ENCODE measurements at regions of chr4 and their contacts with region 1.

Region 1: DNA sequence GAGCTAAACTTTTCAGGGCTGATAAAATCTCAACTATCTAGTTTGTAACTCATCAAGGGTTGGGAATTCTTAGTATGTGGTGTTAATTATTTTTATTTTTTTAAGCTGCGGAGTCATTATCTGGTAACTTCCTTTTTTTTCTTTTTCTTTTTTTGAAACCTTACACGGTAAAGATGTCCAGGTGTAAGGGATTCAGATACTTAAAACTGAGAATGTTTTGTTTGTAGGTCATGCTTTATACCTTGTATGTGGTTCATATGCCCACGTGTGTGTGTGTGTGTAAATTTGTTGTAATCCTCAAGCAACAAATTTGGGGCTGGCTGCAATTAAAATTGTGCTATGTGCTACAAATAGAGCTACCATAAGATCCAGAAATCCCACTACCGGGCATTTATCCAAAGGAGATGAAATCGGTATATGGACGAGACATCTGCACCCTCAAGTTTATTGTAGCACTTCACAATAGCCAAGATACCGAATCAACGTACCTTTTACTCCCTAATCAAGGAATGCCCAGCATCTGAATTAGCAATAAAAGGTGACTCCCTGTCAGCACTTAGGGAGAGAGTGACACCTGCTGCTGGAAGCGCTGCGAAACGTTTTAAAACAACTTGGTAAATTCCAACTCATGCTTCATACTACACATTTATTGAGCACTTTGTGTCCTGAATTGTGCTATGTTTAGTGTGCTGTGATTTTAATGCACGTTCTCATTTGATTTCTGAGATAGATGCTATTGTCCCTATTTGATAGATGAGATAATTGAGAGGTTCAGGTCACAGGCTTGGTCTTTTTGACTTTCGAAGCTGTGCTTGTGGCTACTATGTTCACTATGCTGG is 16.1 kb downstream of the MSMO1 start:
- DNase-seq: no peak
- ATAC-seq: peak; percentile 35 to 85 (median 57)
- H3K4me3 ChIP-seq: no peak overlapping the region
- H3K27ac ChIP-seq: no peak overlapping the region
- H3K4me1 ChIP-seq: peaks cover 0 to 12% (median 0%) of the 10 kb centered on the region in 4 donors
- H3K27me3 ChIP-seq: no peaks in the 10 kb centered on the region
- CTCF ChIP-seq: peak in 3 of 4 donors; percentile 39 to 54 (median 43)
- POLR2A ChIP-seq: no peak

Region 2: DNA sequence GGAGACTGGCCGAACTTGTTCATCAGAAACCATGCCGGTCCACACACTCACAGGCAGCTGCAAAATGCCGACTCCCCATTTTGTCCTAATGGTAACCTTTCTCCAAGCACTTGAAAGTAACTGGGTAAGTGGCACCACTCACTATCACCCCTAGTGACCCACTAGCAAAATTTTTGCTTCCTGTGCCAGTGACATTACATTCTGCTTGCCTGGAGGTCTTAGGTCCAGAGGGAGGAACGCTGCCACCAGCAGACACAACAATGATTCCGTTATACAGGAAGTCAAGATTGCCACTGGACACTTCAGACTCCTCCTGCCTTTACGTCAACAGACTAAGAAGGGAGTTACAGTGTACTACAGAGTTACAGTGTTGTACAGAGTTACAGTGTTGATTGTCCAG is 219.1 kb before region 1 on chr4:
- intact Hi-C with region 1: loop called in 1 of 2 experiments (anchors 10 kb)
- DNase-seq: no peak
- ATAC-seq: no peak
- H3K4me3 ChIP-seq: no peak overlapping the region
- H3K27ac ChIP-seq: no peak overlapping the region
- H3K4me1 ChIP-seq: no peaks in the 10 kb centered on the region
- H3K27me3 ChIP-seq: no peaks in the 10 kb centered on the region
- CTCF ChIP-seq: no peak
- POLR2A ChIP-seq: no peak